Left lung (tissue), 14 donors: ENCODE measurements at regions of chr16 and their contacts with region 1.

Region 1: DNA sequence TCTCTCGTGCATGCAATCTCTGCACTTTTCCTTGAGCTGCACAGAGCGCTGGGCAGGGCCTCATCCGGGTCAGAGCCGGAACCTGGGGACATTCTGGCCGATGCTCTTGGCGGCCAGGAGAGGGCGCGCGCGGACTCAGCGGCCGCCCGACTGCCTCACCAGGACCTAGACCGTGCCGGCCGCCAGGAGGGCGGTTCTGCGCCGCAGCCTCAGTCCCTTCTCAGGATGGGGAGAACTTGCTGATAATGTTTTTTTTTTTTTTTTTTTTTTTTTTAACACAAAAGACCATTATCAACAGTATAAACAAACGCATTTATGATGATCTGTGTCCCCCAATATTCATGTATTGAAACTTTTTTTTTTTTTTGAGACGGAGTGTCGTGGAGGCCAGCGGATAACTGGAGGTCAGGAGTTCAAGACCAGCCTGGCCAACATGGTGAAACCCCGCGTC is 8.1 kb upstream of the FLYWCH2 start:
- DNase-seq: peak; percentile 50 to 96 (median 83)
- ATAC-seq: peak; percentile 100
- H3K4me3 ChIP-seq: no peak overlapping the region
- H3K27ac ChIP-seq: no peak overlapping the region
- H3K4me1 ChIP-seq: peaks cover 0 to 6% of the 10 kb centered on the region in 2 donors
- H3K27me3 ChIP-seq: no peaks in the 10 kb centered on the region
- CTCF ChIP-seq: peak; percentile 94 to 96

Region 2: DNA sequence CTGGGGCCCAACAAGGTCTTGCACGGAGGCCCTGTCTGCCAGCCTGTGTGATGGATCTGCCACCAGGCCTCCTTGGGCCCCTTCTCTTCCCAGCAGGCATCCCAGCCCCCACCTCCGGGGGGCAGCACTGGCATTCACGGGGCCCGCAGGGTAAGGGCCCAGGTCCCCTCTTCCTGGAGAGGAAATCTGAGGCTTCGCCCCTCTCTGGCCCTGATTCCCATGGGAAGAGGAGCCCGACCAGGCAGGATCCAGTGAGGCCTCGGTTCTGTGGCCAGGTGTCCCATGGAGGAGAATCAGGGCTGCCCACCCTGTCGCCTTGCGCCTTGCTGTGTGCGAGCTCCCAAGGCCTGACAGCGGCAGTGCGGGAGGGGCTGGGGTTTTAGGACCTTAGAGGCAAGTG is 288.7 kb before region 1 on chr16:
- intact Hi-C with region 1: no loop called
- DNase-seq: peak in 1 of 4 donors; percentile 61
- ATAC-seq: no peak
- H3K4me3 ChIP-seq: no peak overlapping the region
- H3K27ac ChIP-seq: no peak overlapping the region
- H3K4me1 ChIP-seq: no peaks in the 10 kb centered on the region
- H3K27me3 ChIP-seq: no peaks in the 10 kb centered on the region
- CTCF ChIP-seq: no peak

Region 3: DNA sequence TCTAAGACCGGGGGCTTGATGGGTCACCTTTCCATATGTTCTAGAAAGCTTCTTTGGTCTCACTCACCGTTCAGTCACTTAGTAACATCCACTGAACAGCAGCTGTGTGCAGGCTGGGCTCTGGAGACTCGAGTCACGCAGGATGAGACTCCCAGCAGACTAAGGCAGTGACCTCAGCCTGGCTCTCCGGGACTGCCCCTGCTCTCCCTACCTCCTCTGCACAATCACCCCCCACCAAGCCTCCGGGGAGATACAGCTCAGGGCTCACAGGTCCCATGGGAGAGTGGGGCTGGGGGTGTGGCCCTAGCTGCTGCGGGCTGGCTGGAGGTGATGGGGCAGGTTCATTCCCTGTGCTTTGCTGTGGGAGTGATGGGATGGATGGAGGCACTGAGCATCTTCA is 22.2 kb after region 1 on chr16:
- intact Hi-C with region 1: no loop called
- DNase-seq: no peak
- ATAC-seq: no peak
- H3K4me3 ChIP-seq: no peak overlapping the region
- H3K27ac ChIP-seq: no peak overlapping the region
- H3K4me1 ChIP-seq: no peaks in the 10 kb centered on the region
- H3K27me3 ChIP-seq: no peaks in the 10 kb centered on the region
- CTCF ChIP-seq: no peak

Region 4: GRCh38 chr16:2926650-2927646 is 52.0 kb after region 1 on chr16:
- intact Hi-C with region 1: loop called in 1 of 2 experiments (anchors 10 kb)
- DNase-seq: peak; percentile 73 to 93 (median 86)
- ATAC-seq: peak; percentile 99
- H3K4me3 ChIP-seq: no peak overlapping the region
- H3K27ac ChIP-seq: no peak overlapping the region
- H3K4me1 ChIP-seq: peaks cover 0 to 11% of the 10 kb centered on the region in 2 donors
- H3K27me3 ChIP-seq: no peaks in the 10 kb centered on the region
- CTCF ChIP-seq: peak; percentile 97 to 99

Region 5: DNA sequence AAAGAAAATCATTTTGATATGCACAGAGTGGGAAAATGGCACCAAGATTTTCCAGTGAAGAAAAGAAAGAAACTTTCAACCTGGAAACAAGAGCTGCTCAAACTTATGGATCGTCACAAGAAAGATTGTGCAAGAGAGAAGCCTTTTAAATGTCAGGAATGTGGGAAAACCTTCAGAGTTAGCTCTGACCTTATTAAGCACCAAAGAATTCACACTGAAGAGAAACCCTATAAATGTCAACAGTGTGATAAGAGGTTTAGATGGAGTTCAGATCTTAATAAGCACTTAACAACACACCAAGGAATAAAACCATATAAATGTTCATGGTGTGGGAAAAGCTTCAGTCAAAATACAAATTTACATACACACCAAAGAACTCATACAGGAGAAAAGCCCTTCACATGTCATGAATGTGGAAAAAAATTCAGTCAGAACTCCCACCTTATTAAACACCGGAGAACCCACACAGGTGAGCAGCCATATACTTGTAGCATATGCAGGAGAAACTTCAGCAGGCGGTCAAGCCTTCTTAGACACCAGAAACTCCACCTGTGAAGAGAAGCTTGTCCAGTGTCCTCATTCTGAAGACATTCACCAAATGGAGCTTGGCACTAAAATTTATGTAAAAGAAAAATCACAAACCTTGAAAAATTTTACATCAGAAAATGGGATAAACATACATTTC is 442.5 kb after region 1 on chr16:
- intact Hi-C with region 1: no loop called
- DNase-seq: no peak
- ATAC-seq: no peak
- H3K4me3 ChIP-seq: no peak overlapping the region
- H3K27ac ChIP-seq: no peak overlapping the region
- H3K4me1 ChIP-seq: no peaks in the 10 kb centered on the region
- H3K27me3 ChIP-seq: no peaks in the 10 kb centered on the region
- CTCF ChIP-seq: no peak